CD8-positive, alpha-beta memory T cell (primary cell): ENCODE measurements at regions of chr3 and their contacts with region 1.

Region 1: GRCh38 chr3:105915524-105915923 is 46.7 kb upstream of the CBLB start:
- DNase-seq: no peak
- H3K4me3 ChIP-seq: no peak overlapping the region
- H3K4me3 Mint-ChIP-seq: no peak overlapping the region
- H3K27ac ChIP-seq: no peak overlapping the region
- H3K27ac Mint-ChIP-seq: no peak overlapping the region
- H3K4me1 ChIP-seq: no peaks in the 10 kb centered on the region
- H3K4me1 Mint-ChIP-seq: peaks cover 10 to 15% (median 13%) of the 10 kb centered on the region in 3 donors
- H3K27me3 ChIP-seq: no peaks in the 10 kb centered on the region
- H3K27me3 Mint-ChIP-seq: no peaks in the 10 kb centered on the region

Region 2: GRCh38 chr3:105885256-105885655 is 30.3 kb before region 1 on chr3:
- CTCF ChIA-PET with region 1: no interaction called
- POLR2A ChIA-PET with region 1: no interaction called
- DNase-seq: no peak
- H3K4me3 ChIP-seq: no peak overlapping the region
- H3K4me3 Mint-ChIP-seq: no peak overlapping the region
- H3K27ac ChIP-seq: no peak overlapping the region
- H3K27ac Mint-ChIP-seq: no peak overlapping the region
- H3K4me1 ChIP-seq: no peaks in the 10 kb centered on the region
- H3K4me1 Mint-ChIP-seq: peaks cover 10 to 22% (median 18%) of the 10 kb centered on the region in 3 donors
- H3K27me3 ChIP-seq: no peaks in the 10 kb centered on the region
- H3K27me3 Mint-ChIP-seq: no peaks in the 10 kb centered on the region

Region 3: GRCh38 chr3:106193876-106194275 is 278.4 kb after region 1 on chr3:
- CTCF ChIA-PET with region 1: no interaction called
- POLR2A ChIA-PET with region 1: interaction called, 12 read pairs
- DNase-seq: no peak
- H3K4me3 ChIP-seq: no peak overlapping the region
- H3K4me3 Mint-ChIP-seq: no peak overlapping the region
- H3K27ac ChIP-seq: no peak overlapping the region
- H3K27ac Mint-ChIP-seq: no peak overlapping the region
- H3K4me1 ChIP-seq: peaks cover 5% of the 10 kb centered on the region
- H3K4me1 Mint-ChIP-seq: peaks cover 6 to 10% (median 9%) of the 10 kb centered on the region in 3 donors
- H3K27me3 ChIP-seq: no peaks in the 10 kb centered on the region
- H3K27me3 Mint-ChIP-seq: no peaks in the 10 kb centered on the region